ENCODE measurements at regions of chr17 and their contacts with region 1.

Region 1: GRCh38 chr17:7351665-7352501 is at the start of gene KCTD11:
- DNase-seq: peak; percentile 93 to 94
- H3K4me3 ChIP-seq: peak within 1 kb of the TSS; percentile 43 to 97 (median 80)
- H3K27ac ChIP-seq: peak within 1 kb of the TSS; percentile 89 to 100 (median 97)
- H3K4me1 ChIP-seq: peaks cover 21 to 53% of the 10 kb centered on the region in 2 donors
- H3K27me3 ChIP-seq: no peaks in the 10 kb centered on the region
- CTCF ChIP-seq: peak in 3 of 6 experiments; percentile 30 to 55 (median 39)
- POLR2A ChIP-seq: peak in 1 of 2 donors; percentile 82
- total RNA-seq, gene KCTD11: 6.6 to 20.4 (median 18.7) TPM

Region 2: GRCh38 chr17:7435221-7435675 is 83.4 kb after region 1 on chr17 and contains the start of gene TMEM102:
- intact Hi-C with region 1: loop called (anchors 5 kb)
- DNase-seq: peak; percentile 98 to 99
- H3K4me3 ChIP-seq: peak within 1 kb of the TSS; percentile 30 to 53 (median 38)
- H3K27ac ChIP-seq: peak within 1 kb of the TSS; percentile 25 to 64 (median 61)
- H3K4me1 ChIP-seq: peaks cover 31 to 42% of the 10 kb centered on the region in 2 donors
- H3K27me3 ChIP-seq: no peaks in the 10 kb centered on the region
- CTCF ChIP-seq: no peak
- POLR2A ChIP-seq: peak in 1 of 2 donors; percentile 63
- total RNA-seq, gene TMEM102: 11.3 to 19.4 (median 16.4) TPM

Region 3: GRCh38 chr17:7484067-7484918 is 132.4 kb after region 1 on chr17 and contains the start of gene POLR2A:
- intact Hi-C with region 1: loop called (anchors 10 kb)
- DNase-seq: peak; percentile 99
- H3K4me3 ChIP-seq: peak within 1 kb of the TSS; percentile 41 to 67 (median 47)
- H3K27ac ChIP-seq: peak within 1 kb of the TSS; percentile 91 to 99 (median 98)
- H3K4me1 ChIP-seq: peaks cover 42 to 67% of the 10 kb centered on the region in 2 donors
- H3K27me3 ChIP-seq: no peaks in the 10 kb centered on the region
- CTCF ChIP-seq: peak in 2 of 6 experiments; percentile 15 to 32
- POLR2A ChIP-seq: peak; percentile 99 to 100
- total RNA-seq, gene POLR2A: 47.6 to 125 (median 82.2) TPM

Measured in thyroid gland (tissue), 4 donors.